Cardiac septum (tissue), 1 donor: ENCODE measurements at regions of chr3 and their contacts with region 1.

Region 1: GRCh38 chr3:151838583-151839312 is 24.8 kb downstream of the AADAC start:
- DNase-seq: no peak

Region 2: DNA sequence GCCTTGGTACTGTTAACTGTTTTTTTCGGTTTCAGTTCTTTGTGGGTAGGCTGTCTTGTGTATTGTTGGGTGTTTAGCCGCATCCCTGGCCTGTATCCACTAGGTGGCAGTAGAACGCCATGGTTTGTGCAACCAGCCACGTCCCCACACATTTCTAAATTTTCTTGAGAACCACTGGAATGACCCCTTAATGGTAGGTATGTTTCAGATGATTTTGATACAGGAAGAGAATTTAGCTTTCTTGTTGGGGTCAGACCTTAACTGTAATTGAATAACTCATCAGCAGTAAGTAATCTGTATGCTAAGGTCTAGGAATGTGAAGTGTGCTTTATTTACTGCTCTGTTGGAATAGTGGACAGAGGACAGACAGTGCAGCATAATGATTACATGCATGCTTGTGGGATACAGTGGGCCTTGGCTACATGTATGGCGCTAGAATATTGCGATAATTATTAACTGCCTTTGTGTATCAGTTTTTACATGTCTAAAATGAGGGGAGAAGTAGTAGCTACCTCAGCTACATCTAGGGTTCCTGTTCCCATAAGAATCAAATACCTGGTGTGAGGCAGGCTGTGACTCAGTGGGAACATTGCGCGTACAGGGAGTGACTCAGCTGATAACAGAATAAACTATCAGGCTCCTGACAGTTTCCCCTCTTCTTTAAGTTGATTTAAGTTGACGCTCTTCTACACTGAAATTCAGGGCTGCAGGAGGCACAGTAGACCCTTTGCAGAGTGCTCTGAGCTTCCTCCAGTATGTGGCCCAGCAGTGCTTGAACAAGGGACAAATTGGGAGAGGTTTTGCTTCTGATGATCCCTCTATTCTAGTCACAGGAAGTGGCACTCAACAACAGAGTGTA is 610.7 kb before region 1 on chr3:
- intact Hi-C with region 1: loop called (anchors 5 kb)
- DNase-seq: peak; percentile 89

Region 3: DNA sequence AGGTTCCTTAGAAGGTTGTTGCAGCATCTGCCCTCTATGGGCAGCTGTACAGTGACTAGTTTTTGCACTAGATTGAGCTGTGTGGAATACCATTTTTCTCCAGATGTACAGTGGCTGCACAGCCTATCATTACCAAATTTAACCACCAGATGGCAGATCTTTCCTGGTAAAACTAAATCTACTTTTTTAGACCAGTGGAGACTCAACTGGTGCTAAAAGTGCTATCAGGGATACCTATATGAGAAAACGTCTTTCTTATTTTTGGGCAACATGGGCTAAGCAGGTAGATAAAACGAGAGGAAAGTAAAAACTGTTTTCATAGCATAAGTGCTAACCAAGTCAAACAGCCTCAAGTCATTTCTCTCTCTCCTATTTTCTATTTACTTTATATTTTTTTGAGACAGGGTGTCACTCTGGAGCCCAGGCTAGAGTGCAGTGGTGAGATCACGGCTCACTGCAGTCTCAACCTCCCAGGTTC is 399.1 kb before region 1 on chr3:
- intact Hi-C with region 1: loop called (anchors 2 kb)
- DNase-seq: no peak

Region 4: GRCh38 chr3:151468284-151468917 is 370.3 kb before region 1 on chr3:
- intact Hi-C with region 1: loop called (anchors 2 kb)
- DNase-seq: no peak

Region 5: DNA sequence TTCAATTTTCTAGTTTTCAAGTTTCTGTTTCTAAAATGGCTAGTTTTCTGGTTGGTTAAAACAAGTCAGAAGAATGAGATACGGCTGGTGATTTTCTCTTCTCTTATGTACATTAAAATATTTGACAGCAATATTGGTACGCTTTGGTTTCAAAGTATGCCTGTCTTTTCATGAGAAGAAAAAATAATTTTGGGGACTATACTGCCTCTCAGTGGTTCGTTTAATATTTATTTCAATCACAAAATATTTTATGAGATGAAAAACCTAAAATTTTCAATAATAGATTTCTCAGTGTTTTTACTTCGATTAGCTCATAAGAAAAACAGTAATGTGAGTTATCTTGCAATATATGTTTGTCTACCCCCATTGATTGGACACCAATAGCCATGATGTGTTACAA is 177.9 kb before region 1 on chr3:
- intact Hi-C with region 1: loop called (anchors 10 kb)
- DNase-seq: no peak

Region 6: DNA sequence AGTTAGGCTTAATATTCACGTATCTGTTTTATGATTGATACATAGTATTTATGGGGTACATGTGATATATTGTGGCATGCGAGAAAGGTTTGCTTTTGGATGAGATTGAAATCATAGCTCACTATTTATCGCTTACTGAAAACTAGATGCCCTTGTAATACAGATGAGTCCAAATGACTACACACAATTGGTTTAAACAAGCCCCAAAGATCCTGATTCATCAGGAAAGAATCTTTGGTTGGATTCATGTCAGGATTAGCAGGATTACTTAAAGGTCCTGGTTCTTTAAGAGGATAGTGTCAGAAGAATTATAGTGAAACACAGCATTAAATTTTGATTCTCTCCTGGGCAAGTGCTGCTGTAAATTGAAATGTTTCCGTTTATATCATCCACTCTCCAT is 43.5 kb before region 1 on chr3:
- intact Hi-C with region 1: no loop called
- DNase-seq: no peak

Region 7: GRCh38 chr3:151918253-151919029 is 79.7 kb after region 1 on chr3:
- intact Hi-C with region 1: loop called (anchors 5 kb)
- DNase-seq: no peak